Calu3 (cell line): ENCODE measurements at regions of chr6 and their contacts with region 1.

Region 1: DNA sequence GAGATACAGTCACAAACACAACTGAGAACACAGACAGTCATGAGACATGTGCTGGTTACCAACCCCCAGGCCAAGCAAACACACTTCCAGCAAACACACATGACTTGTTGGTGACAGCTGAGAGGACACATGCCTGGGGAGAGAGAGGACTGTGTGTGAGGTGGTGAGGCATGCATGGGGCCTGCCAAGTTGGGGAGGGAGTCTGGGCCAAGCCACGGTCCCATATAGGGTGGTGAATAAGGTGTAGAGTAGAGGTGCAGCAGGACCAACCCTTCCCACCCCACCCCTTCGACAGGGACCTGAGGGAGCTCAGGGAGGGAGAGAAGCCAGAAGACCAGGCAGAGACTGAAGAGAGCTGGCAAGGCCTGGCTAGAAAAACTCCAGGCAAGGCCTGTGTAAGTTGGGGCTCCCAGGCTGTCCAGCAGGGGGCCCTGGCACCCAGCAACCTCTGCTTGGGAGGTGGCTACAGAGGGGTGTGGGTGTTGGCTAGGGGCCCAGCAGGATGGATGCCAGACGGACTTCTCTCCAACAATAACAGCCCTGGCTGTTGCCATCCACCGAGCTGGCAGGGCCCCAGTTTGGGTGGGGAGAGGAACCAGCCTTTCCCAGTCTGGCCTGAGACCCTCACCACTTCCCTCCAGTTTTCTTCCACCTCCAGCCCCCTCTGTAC is 2.0 kb upstream of the SLC29A1 start:
- DNase-seq: peak; percentile 98
- H3K4me3 Mint-ChIP-seq: peak overlapping the region; percentile 5
- H3K27ac Mint-ChIP-seq: peak overlapping the region; percentile 11
- H3K4me1 Mint-ChIP-seq: peaks cover 71% of the 10 kb centered on the region
- H3K27me3 Mint-ChIP-seq: no peaks in the 10 kb centered on the region
- CTCF ChIP-seq: peak; percentile 93

Region 2: DNA sequence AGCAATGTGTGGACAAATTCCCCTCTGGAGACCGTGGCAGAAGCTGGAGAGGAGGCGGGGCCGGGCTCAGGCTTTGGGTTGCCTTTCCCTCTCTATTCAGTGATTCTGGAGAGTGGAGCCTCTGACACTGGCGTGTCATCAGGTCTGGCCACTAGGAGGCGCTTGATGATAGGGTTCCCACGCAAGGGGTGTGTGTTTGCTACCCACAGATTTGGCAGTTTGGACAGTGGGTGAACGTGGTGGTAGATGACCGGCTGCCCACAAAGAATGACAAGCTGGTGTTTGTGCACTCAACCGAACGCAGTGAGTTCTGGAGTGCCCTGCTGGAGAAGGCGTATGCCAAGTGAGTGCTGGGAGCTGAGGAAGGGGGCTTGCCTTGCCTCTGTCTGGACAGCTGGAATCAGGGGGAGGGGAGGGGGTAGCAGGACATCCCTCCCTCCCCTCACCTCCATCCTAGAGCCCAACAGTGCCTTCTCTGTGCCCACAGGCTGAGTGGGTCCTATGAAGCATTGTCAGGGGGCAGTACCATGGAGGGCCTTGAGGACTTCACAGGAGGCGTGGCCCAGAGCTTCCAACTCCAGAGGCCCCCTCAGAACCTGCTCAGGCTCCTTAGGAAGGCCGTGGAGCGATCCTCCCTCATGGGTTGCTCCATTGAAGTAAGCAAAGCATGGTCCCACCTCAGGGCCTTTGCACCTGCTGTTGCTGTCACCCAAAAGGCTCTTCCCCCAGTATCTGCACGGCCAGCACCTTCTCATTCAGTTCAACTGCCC is 48.5 kb before region 1 on chr6:
- CTCF ChIA-PET with region 1: interaction called, 7 read pairs
- intact Hi-C with region 1: loop called (anchors 5 kb)
- DNase-seq: peak; percentile 90
- H3K4me3 Mint-ChIP-seq: no peak overlapping the region
- H3K27ac Mint-ChIP-seq: no peak overlapping the region
- H3K4me1 Mint-ChIP-seq: peaks cover 11% of the 10 kb centered on the region
- H3K27me3 Mint-ChIP-seq: peaks cover 50% of the 10 kb centered on the region
- CTCF ChIP-seq: peak; percentile 95

Region 3: DNA sequence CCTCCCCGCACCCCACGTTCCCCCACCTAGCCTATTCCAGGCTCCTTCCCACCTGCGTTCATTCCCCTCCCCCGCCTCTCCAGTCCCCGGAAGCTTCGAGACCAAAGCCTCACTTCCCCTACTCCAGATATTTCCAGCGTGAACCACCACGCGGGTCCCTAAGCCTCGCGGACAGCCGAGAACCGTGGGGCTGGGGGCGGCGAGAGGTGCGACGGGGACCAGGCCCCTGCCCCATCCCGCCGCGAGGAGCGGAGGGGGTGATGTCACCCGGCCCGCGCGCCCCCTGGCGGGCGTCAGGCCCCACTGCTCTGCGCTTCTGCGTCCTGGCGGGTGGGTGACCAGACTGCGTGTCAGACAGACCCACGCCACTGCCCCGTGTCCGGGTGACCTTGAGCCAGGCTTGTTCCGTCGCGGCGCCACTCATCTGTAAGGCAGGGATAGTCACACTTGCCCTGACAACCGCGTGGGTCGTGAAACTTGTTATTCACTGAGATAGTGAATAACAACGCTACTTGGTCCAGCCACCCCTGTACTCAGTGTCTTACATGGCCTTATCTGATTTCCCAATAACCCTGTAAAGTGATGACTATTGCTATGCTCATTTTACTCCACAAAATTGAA is 16.5 kb after region 1 on chr6:
- CTCF ChIA-PET with region 1: interaction called, 12 read pairs
- intact Hi-C with region 1: loop called (anchors 1 kb)
- DNase-seq: peak; percentile 95
- H3K4me3 Mint-ChIP-seq: peak overlapping the region; percentile 83
- H3K27ac Mint-ChIP-seq: peak overlapping the region; percentile 91
- H3K4me1 Mint-ChIP-seq: peaks cover 41% of the 10 kb centered on the region
- H3K27me3 Mint-ChIP-seq: no peaks in the 10 kb centered on the region
- CTCF ChIP-seq: peak; percentile 99

Region 4: DNA sequence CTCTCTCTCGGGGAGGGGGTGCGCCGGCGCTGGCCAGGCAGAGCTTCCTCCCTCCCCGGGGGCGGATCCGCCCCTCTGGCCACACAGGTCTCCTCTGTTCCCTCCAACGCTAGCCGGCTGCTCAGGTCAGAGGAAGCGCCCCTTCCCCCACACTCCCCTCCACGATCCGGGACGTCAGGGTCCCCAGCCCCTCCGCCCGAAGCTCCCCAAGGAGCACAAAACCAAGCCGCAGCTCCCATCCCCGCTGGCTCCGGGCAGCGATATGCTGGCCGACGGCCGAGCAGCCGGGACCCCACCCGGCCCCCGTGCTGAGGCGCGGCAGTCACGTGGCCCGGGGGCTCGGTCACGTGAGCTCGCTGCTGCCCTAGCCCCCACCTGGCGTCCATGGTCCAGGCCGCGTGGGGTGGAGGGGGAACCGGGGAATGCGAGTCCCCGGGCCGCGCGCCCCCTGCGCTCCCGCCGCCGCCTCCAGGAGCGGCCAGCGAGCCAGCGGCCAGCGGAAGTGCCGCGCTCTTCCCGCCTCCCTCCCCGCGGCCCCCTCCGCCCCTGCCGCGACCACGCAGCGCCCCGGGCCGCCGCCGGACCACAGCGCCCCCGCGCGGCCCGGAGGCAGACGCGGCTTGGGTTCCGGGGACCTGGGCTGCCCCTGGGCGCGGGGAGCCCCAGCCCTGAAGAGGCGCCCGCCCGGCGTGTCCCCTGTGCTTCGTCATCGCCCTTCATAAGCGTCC is 35.8 kb after region 1 on chr6 and contains the start of gene SLC35B2:
- CTCF ChIA-PET with region 1: interaction called, 11 read pairs
- intact Hi-C with region 1: no loop called
- DNase-seq: peak; percentile 91
- H3K4me3 Mint-ChIP-seq: peak within 1 kb of the TSS; percentile 86
- H3K27ac Mint-ChIP-seq: peak within 1 kb of the TSS; percentile 89
- H3K4me1 Mint-ChIP-seq: peaks cover 74% of the 10 kb centered on the region
- H3K27me3 Mint-ChIP-seq: no peaks in the 10 kb centered on the region
- CTCF ChIP-seq: peak; percentile 94
- total RNA-seq, gene SLC35B2: 129 and 143 TPM in 2 replicates

Region 5: DNA sequence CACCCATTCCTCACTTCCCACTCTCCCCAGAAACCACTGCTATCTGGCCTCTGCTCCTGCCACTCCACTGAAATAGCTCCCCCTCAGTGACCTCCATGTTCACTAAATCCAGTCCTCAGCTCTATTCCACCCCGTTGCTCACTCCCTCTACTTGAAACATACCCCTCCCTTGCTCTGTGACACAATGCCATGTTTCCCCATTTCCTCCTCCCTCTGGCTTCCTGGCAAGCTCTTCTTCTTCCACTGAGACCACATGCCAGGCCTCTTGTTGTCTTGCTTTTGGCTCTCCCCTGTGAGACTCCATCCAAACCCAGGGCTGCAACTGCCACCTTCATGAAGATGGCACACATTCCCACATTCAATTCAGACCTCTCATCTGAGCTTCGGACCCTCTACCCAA is 62.7 kb after region 1 on chr6:
- CTCF ChIA-PET with region 1: no interaction called
- intact Hi-C with region 1: no loop called
- DNase-seq: no peak
- H3K4me3 Mint-ChIP-seq: no peak overlapping the region
- H3K27ac Mint-ChIP-seq: no peak overlapping the region
- H3K4me1 Mint-ChIP-seq: no peaks in the 10 kb centered on the region
- H3K27me3 Mint-ChIP-seq: peaks cover 94% of the 10 kb centered on the region
- CTCF ChIP-seq: no peak